HCT116 (cell line): ENCODE measurements at regions of chr1 and their contacts with region 1.

Region 1: GRCh38 chr1:75991497-75992114 is 59.4 kb upstream of the ASB17 start:
- DNase-seq: peak; percentile 75
- ATAC-seq: peak; percentile 93
- H3K4me3 ChIP-seq: no peak overlapping the region
- H3K27ac ChIP-seq: no peak overlapping the region
- H3K4me1 ChIP-seq: no peaks in the 10 kb centered on the region
- H3K27me3 ChIP-seq: peaks cover 12% of the 10 kb centered on the region
- CTCF ChIP-seq: peak; percentile 66 to 87 (median 75)
- POLR2A ChIP-seq: no peak
- RAD21 ChIP-seq: peak; percentile 83

Region 2: GRCh38 chr1:75980972-75981897 is 10.4 kb before region 1 on chr1:
- CTCF ChIA-PET with region 1: no interaction called
- POLR2A ChIA-PET with region 1: no interaction called
- RAD21 ChIA-PET with region 1: no interaction called
- intact Hi-C with region 1: no loop called
- DNase-seq: no peak
- ATAC-seq: no peak
- H3K4me3 ChIP-seq: no peak overlapping the region
- H3K27ac ChIP-seq: no peak overlapping the region
- H3K4me1 ChIP-seq: no peaks in the 10 kb centered on the region
- H3K27me3 ChIP-seq: no peaks in the 10 kb centered on the region
- CTCF ChIP-seq: no peak
- POLR2A ChIP-seq: no peak
- RAD21 ChIP-seq: no peak

Region 3: DNA sequence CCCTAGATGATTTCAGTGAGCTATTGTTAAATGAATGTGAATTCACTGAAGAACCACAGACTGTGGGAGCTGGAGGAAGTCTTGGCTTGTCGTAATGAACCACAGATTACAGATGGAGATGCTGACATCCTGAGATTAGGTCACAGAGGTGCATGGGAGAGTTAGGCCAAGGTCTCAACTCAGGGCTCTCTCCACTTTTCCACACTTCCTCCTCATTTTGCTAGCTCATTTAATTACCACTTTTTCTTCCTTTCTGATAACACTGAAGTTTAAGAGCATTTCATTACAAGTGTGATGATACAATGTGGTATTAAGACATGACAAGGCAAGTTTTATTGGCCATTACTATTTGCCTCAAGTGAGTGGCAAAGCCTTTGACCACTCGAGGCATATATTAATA is 113.8 kb after region 1 on chr1:
- CTCF ChIA-PET with region 1: no interaction called
- POLR2A ChIA-PET with region 1: no interaction called
- RAD21 ChIA-PET with region 1: no interaction called
- intact Hi-C with region 1: no loop called
- DNase-seq: no peak
- ATAC-seq: no peak
- H3K4me3 ChIP-seq: no peak overlapping the region
- H3K27ac ChIP-seq: no peak overlapping the region
- H3K4me1 ChIP-seq: no peaks in the 10 kb centered on the region
- H3K27me3 ChIP-seq: no peaks in the 10 kb centered on the region
- CTCF ChIP-seq: no peak
- POLR2A ChIP-seq: no peak
- RAD21 ChIP-seq: no peak

Region 4: GRCh38 chr1:76140227-76140626 is 148.6 kb after region 1 on chr1:
- CTCF ChIA-PET with region 1: no interaction called
- POLR2A ChIA-PET with region 1: no interaction called
- RAD21 ChIA-PET with region 1: no interaction called
- intact Hi-C with region 1: loop called (anchors 10 kb)
- DNase-seq: no peak
- ATAC-seq: peak; percentile 72
- H3K4me3 ChIP-seq: no peak overlapping the region
- H3K27ac ChIP-seq: no peak overlapping the region
- H3K4me1 ChIP-seq: 0 out of 4 replicates have a peak, but pooled peaks cover 0 to 3% of the 10 kb centered on the region in 2 experiments
- H3K27me3 ChIP-seq: no peaks in the 10 kb centered on the region
- CTCF ChIP-seq: peak in 2 of 3 experiments; percentile 20 to 24; a peak in 2 of 6 replicates
- POLR2A ChIP-seq: no peak
- RAD21 ChIP-seq: 0 out of 2 replicates have a peak, but pooled peaks have one; percentile 18